PC-3 (cell line): ENCODE measurements at regions of chr1 and their contacts with region 1.

Region 1: DNA sequence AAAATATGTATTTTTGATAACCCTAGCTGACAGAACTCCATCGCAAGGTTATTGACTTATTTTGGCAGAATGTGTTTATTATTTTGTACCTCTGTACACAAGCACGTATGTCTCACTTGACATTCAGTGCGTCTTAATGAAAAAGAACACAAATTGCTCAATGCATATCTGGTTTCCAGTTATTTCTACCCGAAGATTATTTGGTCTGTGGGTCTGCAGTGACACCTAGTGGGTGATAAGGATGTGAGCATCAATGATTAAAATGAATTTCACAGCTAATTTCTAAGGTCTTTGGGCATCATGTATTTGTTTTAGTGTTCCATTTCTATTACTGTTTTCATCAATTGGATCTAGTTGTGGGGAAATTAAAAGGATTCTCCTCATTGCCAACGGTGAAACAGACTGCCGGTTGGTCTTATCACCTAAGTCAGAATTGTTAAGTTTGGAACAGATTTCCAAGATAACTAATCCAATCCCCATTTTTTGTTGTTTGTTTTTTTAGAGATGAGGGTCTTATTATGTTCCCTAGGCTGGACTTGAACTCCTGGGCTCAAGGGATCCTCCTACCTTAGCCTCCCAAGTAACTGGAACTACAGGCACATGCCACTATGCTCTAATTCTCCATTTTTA is 13.9 kb downstream of the DDX20 start:
- DNase-seq: peak; percentile 74
- ATAC-seq: peak; percentile 65
- H3K4me3 ChIP-seq: no peak overlapping the region
- H3K27ac ChIP-seq: no peak overlapping the region
- H3K4me1 ChIP-seq: no peaks in the 10 kb centered on the region
- H3K27me3 ChIP-seq: no peaks in the 10 kb centered on the region
- CTCF ChIP-seq: peak; percentile 89

Region 2: DNA sequence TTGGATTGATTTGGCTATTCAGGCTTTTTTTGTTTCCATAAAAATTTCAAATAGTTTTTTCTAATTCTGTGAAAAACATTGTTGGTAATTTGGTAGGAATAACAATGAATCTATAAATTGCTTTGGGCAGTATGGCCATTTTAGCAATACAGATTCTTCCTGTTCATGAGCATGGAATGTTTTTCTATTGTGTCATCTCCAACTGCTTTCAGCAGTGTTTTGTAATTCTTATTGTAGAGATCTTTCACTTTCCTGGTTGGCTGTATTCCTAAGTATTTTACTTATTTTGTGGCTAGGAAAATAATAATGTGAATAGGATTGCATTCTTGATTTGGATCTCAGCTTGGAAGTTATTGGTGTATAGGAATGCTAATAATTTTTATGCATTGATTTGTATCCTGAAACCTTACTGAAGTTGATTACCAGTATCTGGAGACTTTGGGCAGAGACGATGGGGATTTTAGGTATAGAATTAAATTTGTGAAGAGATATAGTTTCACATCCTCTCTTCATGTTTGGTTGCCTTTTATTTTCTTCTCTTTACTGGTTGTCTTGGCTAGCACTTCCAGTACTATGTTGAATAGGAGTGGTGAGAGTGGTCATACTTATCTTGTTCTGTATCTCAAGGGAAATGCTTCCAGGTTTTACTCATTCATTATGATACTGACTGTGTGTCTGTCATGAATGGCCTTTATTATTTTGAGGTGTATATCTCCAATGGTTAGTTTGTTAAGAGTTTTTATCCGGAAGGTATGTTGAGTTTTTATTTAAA is 687.0 kb before region 1 on chr1:
- CTCF ChIA-PET with region 1: no interaction called
- POLR2A ChIA-PET with region 1: no interaction called
- intact Hi-C with region 1: no loop called
- DNase-seq: peak; percentile 8
- ATAC-seq: no peak
- H3K4me3 ChIP-seq: no peak overlapping the region
- H3K27ac ChIP-seq: no peak overlapping the region
- H3K4me1 ChIP-seq: no peaks in the 10 kb centered on the region
- H3K27me3 ChIP-seq: peaks cover 30% of the 10 kb centered on the region
- CTCF ChIP-seq: no peak

Region 3: DNA sequence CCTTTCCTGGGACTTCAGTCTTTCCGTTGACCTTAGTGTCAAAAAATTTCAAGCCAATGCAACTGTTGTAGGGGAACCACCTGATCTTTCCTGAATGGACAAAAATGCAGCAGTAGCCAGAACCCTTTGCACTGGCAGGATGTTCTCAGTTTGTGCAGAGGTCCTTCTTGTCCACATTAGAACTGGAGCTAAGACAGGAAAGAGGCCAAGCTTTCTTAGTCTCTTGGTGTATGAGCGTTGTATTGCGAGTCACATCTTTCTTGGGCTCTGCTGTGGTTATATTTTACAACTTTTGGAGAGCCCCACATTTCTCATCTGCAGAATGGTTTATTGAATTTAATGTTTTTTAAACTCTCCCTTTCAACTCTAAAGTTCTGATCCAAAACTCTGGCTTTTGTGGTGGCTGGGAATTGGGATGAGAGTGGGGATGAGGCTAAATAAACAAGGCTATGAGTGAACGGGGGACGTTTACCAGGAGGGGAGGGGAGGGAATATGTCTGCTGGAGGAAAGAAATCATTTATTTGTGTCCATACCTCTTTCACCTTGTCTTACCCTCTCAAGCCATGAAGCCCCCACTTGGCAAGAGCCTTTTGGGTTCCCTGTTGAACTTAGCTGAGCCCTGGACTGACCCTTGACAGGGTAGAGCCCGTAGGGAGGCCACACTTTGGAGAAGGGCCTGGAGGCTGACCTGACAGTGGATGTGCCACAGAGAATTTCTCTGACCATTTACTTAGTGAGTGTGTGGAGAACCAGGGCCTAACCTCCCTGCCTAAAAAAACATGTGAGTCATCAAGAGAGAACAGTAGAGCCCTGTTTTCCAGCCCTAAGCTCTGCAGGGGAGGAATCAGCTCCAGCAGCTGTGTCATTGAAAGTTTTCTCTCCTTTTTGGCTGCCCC is 541.5 kb before region 1 on chr1:
- CTCF ChIA-PET with region 1: no interaction called
- POLR2A ChIA-PET with region 1: no interaction called
- intact Hi-C with region 1: loop called (anchors 5 kb)
- DNase-seq: peak; percentile 91
- ATAC-seq: peak; percentile 100
- H3K4me3 ChIP-seq: peak overlapping the region; percentile 9; the same call in 1 of the 2 replicates
- H3K27ac ChIP-seq: peak overlapping the region; percentile 89
- H3K4me1 ChIP-seq: peaks cover 31% of the 10 kb centered on the region
- H3K27me3 ChIP-seq: no peaks in the 10 kb centered on the region
- CTCF ChIP-seq: no peak

Region 4: DNA sequence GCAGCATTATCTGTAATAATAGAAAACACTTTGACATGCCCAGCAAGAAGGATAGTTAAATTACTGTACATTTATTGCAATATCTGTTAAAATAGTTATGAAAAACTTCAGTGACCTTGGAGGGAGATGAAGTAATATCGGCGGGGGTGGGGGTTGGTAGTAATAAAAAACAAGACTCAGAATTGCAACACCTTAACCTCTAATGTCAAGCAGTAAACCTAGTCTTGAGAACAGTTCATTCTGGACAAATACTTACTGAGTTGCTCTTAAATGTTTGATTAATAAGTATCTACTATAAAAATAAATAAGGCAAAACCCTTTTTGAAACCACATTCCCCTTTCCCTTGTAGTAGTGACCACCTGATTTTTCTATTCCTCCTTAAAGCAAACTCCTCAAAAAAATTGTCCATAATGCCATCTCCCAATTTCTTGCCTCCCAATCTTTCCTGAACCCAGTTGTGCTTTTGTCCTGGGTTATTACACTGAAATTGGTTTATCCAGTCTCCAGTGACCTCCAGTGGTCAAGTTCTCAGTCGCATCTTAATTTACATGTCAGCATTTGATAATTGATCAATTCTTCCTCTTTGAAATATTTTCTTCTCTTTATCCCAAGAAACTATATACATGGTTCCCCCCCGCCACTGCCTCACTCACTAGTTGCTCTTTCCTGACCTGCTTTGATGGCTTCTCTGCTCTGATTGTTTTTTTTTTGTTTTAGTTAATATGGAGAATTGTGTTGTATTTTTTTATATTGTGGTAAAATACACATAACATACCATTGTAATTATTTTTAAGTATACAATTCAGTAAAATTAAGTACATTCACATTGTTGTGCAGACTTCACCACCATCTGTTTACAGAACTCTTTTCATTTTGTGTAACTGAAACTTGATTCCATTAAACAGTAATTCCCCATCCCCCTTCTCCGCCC is 113.3 kb before region 1 on chr1:
- CTCF ChIA-PET with region 1: no interaction called
- POLR2A ChIA-PET with region 1: no interaction called
- intact Hi-C with region 1: loop called (anchors 5 kb)
- DNase-seq: peak; percentile 71
- ATAC-seq: peak; percentile 45; the same call in 1 of the 2 replicates
- H3K4me3 ChIP-seq: no peak overlapping the region
- H3K27ac ChIP-seq: no peak overlapping the region
- H3K4me1 ChIP-seq: no peaks in the 10 kb centered on the region
- H3K27me3 ChIP-seq: no peaks in the 10 kb centered on the region
- CTCF ChIP-seq: peak; percentile 87

Region 5: GRCh38 chr1:111827946-111828538 is 58.4 kb after region 1 on chr1:
- CTCF ChIA-PET with region 1: no interaction called
- POLR2A ChIA-PET with region 1: no interaction called
- intact Hi-C with region 1: no loop called
- DNase-seq: no peak
- ATAC-seq: no peak
- H3K4me3 ChIP-seq: no peak overlapping the region
- H3K27ac ChIP-seq: no peak overlapping the region
- H3K4me1 ChIP-seq: no peaks in the 10 kb centered on the region
- H3K27me3 ChIP-seq: peaks cover 67% of the 10 kb centered on the region
- CTCF ChIP-seq: no peak